MCF 10A (cell line): ENCODE measurements at regions of chr14 and their contacts with region 1.

Region 1: GRCh38 chr14:50116181-50116956 is at the start of gene VCPKMT:
- DNase-seq: peak; percentile 90
- H3K4me3 Mint-ChIP-seq: peak within 1 kb of the TSS; percentile 93
- H3K27ac Mint-ChIP-seq: peak within 1 kb of the TSS; percentile 99
- H3K4me1 Mint-ChIP-seq: no peaks in the 10 kb centered on the region
- H3K27me3 Mint-ChIP-seq: no peaks in the 10 kb centered on the region
- CTCF ChIP-seq: no peak
- total RNA-seq, gene VCPKMT: 7.2 and 10.4 TPM in 2 replicates

Region 2: DNA sequence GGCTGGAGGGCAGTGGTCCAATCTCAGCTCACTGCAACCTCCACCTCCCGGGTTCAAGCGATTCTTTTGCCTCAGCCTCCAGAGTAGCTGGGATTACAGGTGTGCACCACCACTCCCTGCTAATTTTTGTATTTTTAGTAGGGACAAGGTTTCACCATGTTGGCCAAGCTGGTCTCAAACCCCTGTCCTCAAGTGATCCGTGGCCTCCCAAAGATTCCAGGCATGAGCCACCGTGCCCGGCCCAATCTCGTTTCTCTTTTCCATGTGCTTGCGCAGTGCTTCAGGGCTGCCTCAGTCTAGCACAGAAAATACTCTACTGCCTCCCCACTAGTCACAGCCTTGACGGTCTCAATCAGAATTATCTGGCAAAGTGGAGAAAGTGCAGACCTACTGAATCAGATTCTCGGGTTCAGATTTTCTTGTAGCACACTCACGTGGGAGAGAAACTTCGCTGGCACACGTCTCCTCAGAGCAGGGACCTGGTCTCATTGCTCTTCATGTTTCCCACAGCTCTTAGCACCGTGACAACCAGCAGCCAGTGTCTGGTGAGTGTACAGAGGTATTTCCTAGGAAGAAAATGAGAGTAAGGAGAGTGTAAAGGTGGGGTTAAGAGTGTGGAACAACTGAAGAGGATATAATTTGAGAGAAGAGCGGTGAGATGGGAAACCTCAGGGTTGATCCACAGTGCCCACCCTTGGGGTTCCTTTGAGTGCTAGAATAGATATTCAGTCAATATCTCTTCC is 134.5 kb before region 1 on chr14:
- CTCF ChIA-PET with region 1: no interaction called
- POLR2A ChIA-PET with region 1: no interaction called
- intact Hi-C with region 1: no loop called
- DNase-seq: no peak
- H3K4me3 Mint-ChIP-seq: no peak overlapping the region
- H3K27ac Mint-ChIP-seq: no peak overlapping the region
- H3K4me1 Mint-ChIP-seq: no peaks in the 10 kb centered on the region
- H3K27me3 Mint-ChIP-seq: no peaks in the 10 kb centered on the region
- CTCF ChIP-seq: no peak

Region 3: GRCh38 chr14:50067723-50068495 is 48.5 kb before region 1 on chr14:
- CTCF ChIA-PET with region 1: no interaction called
- POLR2A ChIA-PET with region 1: no interaction called
- intact Hi-C with region 1: no loop called
- DNase-seq: peak; percentile 86
- H3K4me3 Mint-ChIP-seq: no peak overlapping the region
- H3K27ac Mint-ChIP-seq: peak overlapping the region; percentile 76
- H3K4me1 Mint-ChIP-seq: peaks cover 26% of the 10 kb centered on the region
- H3K27me3 Mint-ChIP-seq: no peaks in the 10 kb centered on the region
- CTCF ChIP-seq: no peak

Region 4: GRCh38 chr14:50099335-50099734 is 17.0 kb before region 1 on chr14:
- CTCF ChIA-PET with region 1: interaction called, 5 read pairs
- POLR2A ChIA-PET with region 1: interaction called, 13 read pairs
- intact Hi-C with region 1: no loop called
- DNase-seq: peak; percentile 47
- H3K4me3 Mint-ChIP-seq: no peak overlapping the region
- H3K27ac Mint-ChIP-seq: peak overlapping the region; percentile 33
- H3K4me1 Mint-ChIP-seq: peaks cover 11% of the 10 kb centered on the region
- H3K27me3 Mint-ChIP-seq: no peaks in the 10 kb centered on the region
- CTCF ChIP-seq: no peak

Region 5: GRCh38 chr14:50231475-50232275 is 115.3 kb after region 1 on chr14 and contains the start of gene SOS2:
- CTCF ChIA-PET with region 1: no interaction called
- POLR2A ChIA-PET with region 1: interaction called, 10 read pairs
- intact Hi-C with region 1: loop called (anchors 2 kb)
- DNase-seq: peak; percentile 83
- H3K4me3 Mint-ChIP-seq: peak within 1 kb of the TSS; percentile 84
- H3K27ac Mint-ChIP-seq: peak within 1 kb of the TSS; percentile 95
- H3K4me1 Mint-ChIP-seq: peaks cover 7% of the 10 kb centered on the region
- H3K27me3 Mint-ChIP-seq: no peaks in the 10 kb centered on the region
- CTCF ChIP-seq: no peak
- total RNA-seq, gene SOS2: 19.0 and 21.5 TPM in 2 replicates

Region 6: DNA sequence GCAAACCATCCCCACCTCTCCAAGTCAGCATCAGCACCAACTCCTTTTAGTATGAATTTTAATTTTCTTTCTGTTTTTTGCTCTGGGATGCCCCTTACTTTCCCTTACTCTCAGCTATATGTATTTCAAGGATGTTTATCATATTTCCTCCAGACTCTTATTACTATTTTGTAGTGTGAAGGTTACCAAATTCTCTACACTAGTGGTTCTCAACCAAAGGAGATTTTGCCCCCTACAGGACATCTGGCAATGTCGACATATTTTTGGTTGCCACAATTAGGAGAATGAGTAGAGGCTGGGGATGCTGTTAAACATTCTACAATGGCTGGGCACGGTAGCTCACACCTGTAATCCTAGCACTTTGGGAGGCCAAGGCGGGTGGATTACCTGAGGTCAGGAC is 144.1 kb after region 1 on chr14:
- CTCF ChIA-PET with region 1: interaction called, 3 read pairs
- POLR2A ChIA-PET with region 1: no interaction called
- intact Hi-C with region 1: loop called (anchors 2 kb)
- DNase-seq: peak; percentile 52
- H3K4me3 Mint-ChIP-seq: no peak overlapping the region
- H3K27ac Mint-ChIP-seq: no peak overlapping the region
- H3K4me1 Mint-ChIP-seq: no peaks in the 10 kb centered on the region
- H3K27me3 Mint-ChIP-seq: no peaks in the 10 kb centered on the region
- CTCF ChIP-seq: peak; percentile 27